CD14-positive monocyte (primary cell): ENCODE measurements at regions of chr19 and their contacts with region 1.

Region 1: DNA sequence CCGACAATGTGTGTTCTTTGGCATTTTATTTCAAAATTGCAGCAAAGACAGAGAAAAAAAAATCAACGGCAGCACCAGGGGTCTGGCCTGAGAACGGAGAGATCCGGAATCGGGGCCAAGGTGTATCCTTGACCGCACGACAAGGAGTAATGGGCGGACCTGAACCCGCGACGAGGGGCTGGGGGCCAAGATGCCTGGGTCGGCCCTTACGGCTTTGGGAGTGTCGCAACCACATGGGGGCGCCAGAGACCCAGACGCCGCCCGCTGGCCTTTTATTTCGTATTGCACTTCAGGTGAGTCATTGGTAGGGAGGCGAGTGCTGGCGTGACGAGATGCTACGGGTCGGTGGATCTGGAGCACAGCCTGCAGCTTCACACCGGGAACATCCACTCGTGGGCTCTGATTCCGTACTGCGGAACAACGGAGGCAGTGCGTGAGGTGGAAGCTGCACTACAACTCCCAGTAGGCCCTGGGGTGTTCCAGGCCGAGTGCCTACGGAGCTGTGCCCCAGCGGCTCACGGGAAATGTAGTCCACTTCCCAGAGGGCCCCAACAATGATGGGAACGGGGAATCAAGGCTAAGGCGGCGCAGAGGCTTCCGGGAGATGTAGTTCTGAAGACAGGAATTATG is 15.7 kb downstream of the BCAT2 start:
- DNase-seq: peak; percentile 90 to 93 (median 92)
- H3K4me3 ChIP-seq: peak overlapping the region; percentile 37 to 89 (median 68)
- H3K4me3 Mint-ChIP-seq: peak overlapping the region; percentile 94 to 99
- H3K27ac ChIP-seq: peak overlapping the region; percentile 13 to 76
- H3K27ac Mint-ChIP-seq: peak overlapping the region; percentile 81 to 95 (median 88)
- H3K4me1 ChIP-seq: peaks cover 4 to 6% of the 10 kb centered on the region in 2 donors
- H3K4me1 Mint-ChIP-seq: peaks cover 6% of the 10 kb centered on the region
- H3K27me3 ChIP-seq: no peaks in the 10 kb centered on the region
- H3K27me3 Mint-ChIP-seq: peaks cover under 1 to 4% (median 2%) of the 10 kb centered on the region in 3 donors
- CTCF ChIP-seq: peak; percentile 99

Region 2: DNA sequence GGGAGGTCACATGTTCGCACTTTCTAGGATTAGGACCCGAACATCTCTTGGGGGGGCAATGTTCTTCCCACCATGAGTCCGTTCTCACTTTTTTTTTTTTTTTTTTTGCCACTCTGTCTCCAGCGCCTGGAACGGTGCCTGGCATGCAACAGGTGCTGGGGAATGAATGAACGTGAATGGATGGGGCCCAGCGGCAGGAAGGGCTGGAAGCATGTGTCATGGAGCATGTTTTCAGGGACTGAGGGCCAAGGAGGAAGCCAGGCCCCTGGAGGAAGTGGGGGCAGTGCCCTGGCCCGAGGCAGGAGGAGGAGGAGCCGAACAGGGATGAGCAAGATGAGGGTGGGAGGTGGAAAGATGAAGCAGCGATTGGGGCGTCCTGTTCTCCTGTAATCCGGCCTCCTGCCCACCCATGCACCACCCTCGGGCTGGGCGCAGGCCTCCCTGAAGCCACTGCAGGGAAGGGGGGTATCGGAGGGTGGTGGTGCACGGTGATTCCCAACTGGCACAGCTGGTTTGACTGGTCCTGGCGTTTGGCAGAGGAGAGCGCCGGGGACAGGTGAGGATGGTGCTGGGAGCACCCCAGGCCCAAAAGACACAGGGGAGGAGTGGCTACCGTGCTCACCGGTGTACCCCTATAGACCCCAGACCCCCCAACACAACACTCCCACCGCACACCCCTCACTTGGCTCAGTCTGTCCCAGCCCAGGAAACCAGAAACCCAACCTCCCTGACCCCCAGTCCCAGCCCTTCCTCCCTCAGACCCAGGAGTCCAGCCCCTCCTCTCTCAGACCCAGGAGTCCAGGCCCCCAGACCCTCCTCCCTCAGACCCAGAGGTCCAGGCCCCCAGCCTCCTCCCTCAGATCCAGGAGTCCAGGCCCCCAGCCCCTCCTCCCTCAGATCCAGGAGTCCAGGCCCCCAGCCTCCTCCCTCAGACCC is 251.8 kb before region 1 on chr19:
- intact Hi-C with region 1: no loop called
- DNase-seq: peak in 1 of 3 donors; percentile 1
- H3K4me3 ChIP-seq: no peak overlapping the region
- H3K4me3 Mint-ChIP-seq: no peak overlapping the region
- H3K27ac ChIP-seq: no peak overlapping the region
- H3K27ac Mint-ChIP-seq: peak overlapping the region in 2 of 7 donors; percentile 25 to 28
- H3K4me1 ChIP-seq: peaks cover 0 to 4% of the 10 kb centered on the region in 2 donors
- H3K4me1 Mint-ChIP-seq: peaks cover 5% of the 10 kb centered on the region
- H3K27me3 ChIP-seq: no peaks in the 10 kb centered on the region
- H3K27me3 Mint-ChIP-seq: peaks cover 0 to 7% (median 2%) of the 10 kb centered on the region in 3 donors
- CTCF ChIP-seq: no peak

Region 3: DNA sequence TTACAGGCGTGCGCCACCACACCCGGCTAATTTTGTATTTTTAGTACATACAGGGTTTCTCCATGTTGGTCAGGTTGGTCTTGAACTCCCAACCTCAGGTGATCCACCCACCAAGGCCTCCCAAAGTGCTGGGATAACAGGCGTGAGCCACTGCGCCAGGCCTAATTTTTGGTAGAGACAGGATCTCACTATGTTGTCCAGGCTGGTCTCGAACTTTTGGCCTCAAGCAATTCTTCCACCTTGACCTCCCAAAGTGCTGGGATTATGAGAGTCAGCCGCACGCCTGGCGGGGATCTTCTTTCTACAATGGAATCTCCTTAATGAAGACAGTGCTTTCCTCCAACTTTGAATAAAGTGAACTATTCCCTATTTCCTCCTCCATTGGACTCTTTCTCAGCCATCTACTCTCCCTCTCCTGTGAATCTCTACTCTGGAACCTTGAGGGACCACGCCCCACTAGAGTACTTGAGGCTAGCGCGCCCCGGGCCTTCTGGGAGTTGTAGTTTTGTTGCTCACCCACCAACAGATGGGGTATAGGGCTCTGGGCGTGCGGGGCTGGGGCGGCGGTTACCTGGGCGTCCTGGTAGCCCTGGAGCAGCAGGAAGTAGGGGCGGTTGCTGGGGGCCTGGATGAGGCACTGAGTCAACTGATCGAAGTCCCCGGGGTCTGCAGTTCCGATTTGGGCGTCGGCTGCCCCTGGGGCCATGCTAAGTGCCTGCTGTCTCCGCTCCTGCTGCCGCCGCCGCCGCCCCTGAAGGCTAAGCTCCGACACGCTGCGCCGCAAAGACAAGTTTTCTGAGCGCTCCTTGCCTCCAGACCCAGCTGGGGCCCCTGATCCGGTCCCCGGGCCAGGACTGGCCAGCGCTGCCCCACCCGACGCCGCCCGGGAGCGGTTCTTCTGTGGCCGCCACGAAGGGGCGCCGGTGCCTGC is 60.3 kb before region 1 on chr19:
- intact Hi-C with region 1: no loop called
- DNase-seq: no peak
- H3K4me3 ChIP-seq: no peak overlapping the region
- H3K4me3 Mint-ChIP-seq: peak overlapping the region in 1 of 2 donors; percentile 37
- H3K27ac ChIP-seq: no peak overlapping the region
- H3K27ac Mint-ChIP-seq: no peak overlapping the region
- H3K4me1 ChIP-seq: peaks cover 6 to 16% of the 10 kb centered on the region in 2 donors
- H3K4me1 Mint-ChIP-seq: peaks cover 6% of the 10 kb centered on the region
- H3K27me3 ChIP-seq: peaks cover 6% of the 10 kb centered on the region in 2 donors
- H3K27me3 Mint-ChIP-seq: peaks cover 18 to 42% (median 21%) of the 10 kb centered on the region in 3 donors
- CTCF ChIP-seq: no peak

Region 4: DNA sequence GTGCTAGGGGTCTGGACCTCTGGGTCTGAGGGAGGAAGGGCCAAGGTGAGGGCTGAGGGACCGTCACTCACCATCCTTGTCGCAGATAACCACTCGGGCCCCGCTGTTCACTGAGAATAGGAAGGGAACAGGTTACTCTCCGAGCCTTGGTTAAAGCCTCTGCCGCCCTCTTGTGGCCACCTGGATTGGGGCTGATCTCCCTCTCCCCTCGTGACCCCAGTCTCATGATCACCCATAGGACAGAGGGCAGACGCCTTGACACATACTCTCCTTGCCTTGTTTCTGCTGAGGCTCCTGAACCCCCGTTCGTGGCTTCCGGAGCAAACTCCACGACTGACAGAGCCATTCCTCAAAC is 40.5 kb after region 1 on chr19:
- intact Hi-C with region 1: loop called in 1 of 2 experiments (anchors 1 kb)
- DNase-seq: peak; percentile 90 to 93 (median 93)
- H3K4me3 ChIP-seq: peak overlapping the region in 1 of 3 experiments; percentile 65
- H3K4me3 Mint-ChIP-seq: peak overlapping the region; percentile 76 to 93
- H3K27ac ChIP-seq: no peak overlapping the region
- H3K27ac Mint-ChIP-seq: peak overlapping the region in 4 of 7 donors; percentile 74 to 87 (median 82)
- H3K4me1 ChIP-seq: peaks cover 20 to 22% of the 10 kb centered on the region in 2 donors
- H3K4me1 Mint-ChIP-seq: peaks cover 22% of the 10 kb centered on the region
- H3K27me3 ChIP-seq: peaks cover 0 to 20% of the 10 kb centered on the region in 2 donors
- H3K27me3 Mint-ChIP-seq: peaks cover 20 to 24% (median 23%) of the 10 kb centered on the region in 3 donors
- CTCF ChIP-seq: peak; percentile 79

Region 5: GRCh38 chr19:48842789-48843162 is 47.6 kb after region 1 on chr19:
- intact Hi-C with region 1: loop called in 1 of 2 experiments (anchors 2 kb)
- DNase-seq: peak; percentile 36 to 60 (median 53)
- H3K4me3 ChIP-seq: no peak overlapping the region
- H3K4me3 Mint-ChIP-seq: no peak overlapping the region
- H3K27ac ChIP-seq: no peak overlapping the region
- H3K27ac Mint-ChIP-seq: no peak overlapping the region
- H3K4me1 ChIP-seq: no peaks in the 10 kb centered on the region
- H3K4me1 Mint-ChIP-seq: peaks cover 2% of the 10 kb centered on the region
- H3K27me3 ChIP-seq: peaks cover 0 to under 1% of the 10 kb centered on the region in 2 donors
- H3K27me3 Mint-ChIP-seq: peaks cover 2 to 4% (median 3%) of the 10 kb centered on the region in 3 donors
- CTCF ChIP-seq: peak; percentile 77